Activated naive CD4-positive, alpha-beta T cell treated with anti-CD3 and anti-CD28 coated beads for 36 hours (primary cell): ENCODE measurements at regions of chr5 and their contacts with region 1.

Region 1: GRCh38 chr5:79567921-79568549 is 44.2 kb upstream of the TENT2 start:
- DNase-seq: no peak
- H3K4me3 Mint-ChIP-seq: no peak overlapping the region
- H3K27ac Mint-ChIP-seq: no peak overlapping the region
- H3K4me1 Mint-ChIP-seq: peaks cover 8% of the 10 kb centered on the region
- H3K27me3 Mint-ChIP-seq: no peaks in the 10 kb centered on the region

Region 2: DNA sequence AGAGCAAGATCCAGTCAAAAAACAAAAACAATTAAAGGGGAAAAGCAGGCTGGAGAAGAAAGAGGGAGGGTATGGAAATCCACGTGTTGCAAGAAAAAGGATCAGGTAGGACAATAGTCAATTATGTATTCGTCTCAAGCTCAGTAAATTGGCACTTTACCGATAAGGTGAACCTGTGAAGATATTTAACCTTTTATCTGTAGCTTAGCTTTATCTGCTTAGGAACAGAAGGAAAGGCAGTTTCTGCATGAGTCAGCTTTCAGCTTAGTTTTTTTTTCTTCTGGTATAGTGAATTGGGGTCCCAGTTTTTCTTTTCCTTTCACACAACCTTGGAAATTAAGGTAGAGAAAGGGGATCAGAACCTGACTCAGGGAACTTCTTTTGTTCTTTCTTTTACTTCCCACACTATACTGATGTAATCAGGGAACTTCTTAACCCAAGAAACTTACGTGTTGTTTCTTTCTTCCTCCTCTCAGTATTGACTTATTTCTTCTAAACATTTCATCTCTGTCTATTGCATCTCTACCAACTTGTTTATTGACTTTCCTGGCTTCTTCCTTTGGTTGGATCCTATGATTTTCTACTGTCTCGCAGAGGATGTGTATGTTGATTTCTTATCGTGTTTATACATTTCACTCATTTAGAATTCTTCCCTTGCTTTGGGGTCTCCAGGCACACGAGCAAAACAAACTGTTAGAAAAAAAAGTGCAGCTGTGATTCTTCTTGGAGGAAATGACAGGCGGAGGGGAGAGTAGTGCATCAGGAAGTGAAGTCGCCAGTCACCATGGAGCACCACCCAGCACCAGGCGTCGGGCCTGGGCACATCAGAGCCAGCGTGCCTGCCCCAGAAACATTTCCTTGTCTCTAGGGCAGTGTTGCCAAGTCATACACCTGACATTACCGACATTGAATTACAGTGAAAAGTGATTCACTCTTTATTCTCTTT is 796.5 kb before region 1 on chr5:
- CTCF ChIA-PET with region 1: no interaction called
- intact Hi-C with region 1: no loop called
- DNase-seq: peak; percentile 20
- H3K4me3 Mint-ChIP-seq: no peak overlapping the region
- H3K27ac Mint-ChIP-seq: no peak overlapping the region
- H3K4me1 Mint-ChIP-seq: peaks cover 7% of the 10 kb centered on the region
- H3K27me3 Mint-ChIP-seq: no peaks in the 10 kb centered on the region

Region 3: GRCh38 chr5:81187885-81188284 is 1619.8 kb after region 1 on chr5:
- CTCF ChIA-PET with region 1: interaction called, 10 read pairs
- intact Hi-C with region 1: no loop called
- DNase-seq: no peak
- H3K4me3 Mint-ChIP-seq: no peak overlapping the region
- H3K27ac Mint-ChIP-seq: no peak overlapping the region
- H3K4me1 Mint-ChIP-seq: peaks cover 2% of the 10 kb centered on the region
- H3K27me3 Mint-ChIP-seq: no peaks in the 10 kb centered on the region